Activated naive CD4-positive, alpha-beta T cell treated with anti-CD3 and anti-CD28 coated beads for 36 hours (primary cell): ENCODE measurements at regions of chr1 and their contacts with region 1.

Region 1: GRCh38 chr1:215911406-215911968 is 344.4 kb downstream of the KCTD3 start:
- DNase-seq: no peak
- H3K4me3 Mint-ChIP-seq: no peak overlapping the region
- H3K27ac Mint-ChIP-seq: no peak overlapping the region
- H3K4me1 Mint-ChIP-seq: no peaks in the 10 kb centered on the region
- H3K27me3 Mint-ChIP-seq: no peaks in the 10 kb centered on the region

Region 2: GRCh38 chr1:215458104-215458503 is 453.4 kb before region 1 on chr1:
- CTCF ChIA-PET with region 1: no interaction called
- intact Hi-C with region 1: no loop called
- DNase-seq: no peak
- H3K4me3 Mint-ChIP-seq: no peak overlapping the region
- H3K27ac Mint-ChIP-seq: no peak overlapping the region
- H3K4me1 Mint-ChIP-seq: no peaks in the 10 kb centered on the region
- H3K27me3 Mint-ChIP-seq: peaks cover 3% of the 10 kb centered on the region

Region 3: GRCh38 chr1:215617979-215618378 is 293.5 kb before region 1 on chr1:
- CTCF ChIA-PET with region 1: no interaction called
- intact Hi-C with region 1: no loop called
- DNase-seq: no peak
- H3K4me3 Mint-ChIP-seq: no peak overlapping the region
- H3K27ac Mint-ChIP-seq: no peak overlapping the region
- H3K4me1 Mint-ChIP-seq: no peaks in the 10 kb centered on the region
- H3K27me3 Mint-ChIP-seq: no peaks in the 10 kb centered on the region

Region 4: GRCh38 chr1:215819114-215819513 is 92.4 kb before region 1 on chr1:
- CTCF ChIA-PET with region 1: no interaction called
- intact Hi-C with region 1: no loop called
- DNase-seq: no peak
- H3K4me3 Mint-ChIP-seq: no peak overlapping the region
- H3K27ac Mint-ChIP-seq: no peak overlapping the region
- H3K4me1 Mint-ChIP-seq: no peaks in the 10 kb centered on the region
- H3K27me3 Mint-ChIP-seq: no peaks in the 10 kb centered on the region

Region 5: GRCh38 chr1:215932558-215932957 is 21.1 kb after region 1 on chr1:
- CTCF ChIA-PET with region 1: no interaction called
- intact Hi-C with region 1: loop called (anchors 2 kb)
- DNase-seq: no peak
- H3K4me3 Mint-ChIP-seq: no peak overlapping the region
- H3K27ac Mint-ChIP-seq: no peak overlapping the region
- H3K4me1 Mint-ChIP-seq: no peaks in the 10 kb centered on the region
- H3K27me3 Mint-ChIP-seq: no peaks in the 10 kb centered on the region